Posterior cingulate gyrus (tissue), 11 donors: ENCODE measurements at regions of chr11 and their contacts with region 1.

Region 1: GRCh38 chr11:64304316-64305072 is 830 bp upstream of the ESRRA start:
- DNase-seq: peak; percentile 84 to 99 (median 94)

Region 2: GRCh38 chr11:64251016-64251752 is 53.3 kb before region 1 on chr11 and contains the start of gene PLCB3:
- intact Hi-C with region 1: loop called (anchors 5 kb)
- DNase-seq: peak in 5 of 10 donors; percentile 46 to 90 (median 78)

Region 3: GRCh38 chr11:64269380-64270234 is 34.9 kb before region 1 on chr11:
- intact Hi-C with region 1: loop called (anchors 2 kb)
- DNase-seq: peak; percentile 97 to 100 (median 99)

Region 4: GRCh38 chr11:64284962-64285884 is 19.3 kb before region 1 on chr11 and contains the start of gene GPR137:
- intact Hi-C with region 1: loop called (anchors 1 kb)
- DNase-seq: peak; percentile 81 to 98 (median 86)